ENCODE measurements at regions of chr1 and their contacts with region 1.

Region 1: GRCh38 chr1:26820784-26821269 is 5.7 kb upstream of the ZDHHC18 start:
- DNase-seq: peak; percentile 31
- H3K4me3 Mint-ChIP-seq: peak overlapping the region; percentile 39
- H3K27ac Mint-ChIP-seq: peak overlapping the region; percentile 47
- H3K4me1 Mint-ChIP-seq: peaks cover 22% of the 10 kb centered on the region
- H3K27me3 Mint-ChIP-seq: no peaks in the 10 kb centered on the region

Region 2: GRCh38 chr1:26761217-26761616 is 59.6 kb before region 1 on chr1:
- CTCF ChIA-PET with region 1: no interaction called
- POLR2A ChIA-PET with region 1: no interaction called
- intact Hi-C with region 1: no loop called
- DNase-seq: no peak
- H3K4me3 Mint-ChIP-seq: no peak overlapping the region
- H3K27ac Mint-ChIP-seq: no peak overlapping the region
- H3K4me1 Mint-ChIP-seq: peaks cover 7% of the 10 kb centered on the region
- H3K27me3 Mint-ChIP-seq: no peaks in the 10 kb centered on the region

Region 3: DNA sequence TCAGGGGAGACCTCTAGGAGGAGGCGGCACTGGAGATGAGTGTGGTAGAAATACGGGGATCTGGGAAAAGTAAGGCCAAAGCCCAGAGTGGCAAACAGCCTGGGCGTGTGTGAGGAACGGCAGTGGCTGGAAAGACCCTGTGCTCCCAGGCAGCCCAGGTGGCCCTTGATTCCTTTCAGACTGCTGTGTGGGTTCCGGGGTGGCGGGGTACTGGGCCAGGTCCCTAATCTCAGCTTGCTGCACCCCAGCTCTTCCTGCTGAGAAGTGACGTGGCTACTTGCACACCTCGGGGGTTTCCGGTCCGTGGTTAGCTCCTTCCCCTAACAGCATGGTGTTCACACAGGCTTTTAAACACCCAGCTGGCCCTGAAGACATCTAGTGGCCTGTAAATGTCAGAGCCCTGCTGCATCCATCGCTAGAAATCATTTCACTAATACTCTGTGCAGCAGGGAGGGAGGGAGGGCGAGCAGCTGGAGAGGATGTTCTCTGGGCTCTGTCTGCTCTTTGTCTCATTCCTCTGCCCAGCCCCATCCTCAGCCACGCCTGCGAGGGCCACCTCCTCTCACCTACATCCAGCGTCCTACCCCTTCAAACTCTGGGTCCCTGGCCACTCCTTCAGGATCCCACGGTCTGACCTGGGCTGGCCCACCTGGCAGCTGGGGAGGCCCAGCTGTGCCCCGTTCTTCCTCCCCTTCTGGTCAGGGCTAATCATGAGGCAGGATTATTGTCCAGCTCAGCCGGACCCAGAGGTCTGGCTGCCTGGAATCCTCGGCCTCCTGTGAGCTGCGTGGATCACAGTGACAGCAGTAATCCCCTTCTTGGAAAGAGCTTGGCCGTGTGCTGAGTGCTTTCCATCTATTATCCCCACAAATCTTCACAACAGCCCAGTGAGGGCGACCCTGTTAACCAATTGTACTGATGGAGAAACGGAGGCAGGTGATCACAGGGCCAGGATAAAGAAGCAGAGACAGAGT is 12.9 kb after region 1 on chr1:
- CTCF ChIA-PET with region 1: interaction called, 18 read pairs
- POLR2A ChIA-PET with region 1: interaction called, 3 read pairs
- intact Hi-C with region 1: no loop called
- DNase-seq: peak; percentile 93
- H3K4me3 Mint-ChIP-seq: peak overlapping the region; percentile 72
- H3K27ac Mint-ChIP-seq: peak overlapping the region; percentile 100
- H3K4me1 Mint-ChIP-seq: peaks cover 78% of the 10 kb centered on the region
- H3K27me3 Mint-ChIP-seq: no peaks in the 10 kb centered on the region